ENCODE measurements at regions of chr2 and their contacts with region 1.

Region 1: DNA sequence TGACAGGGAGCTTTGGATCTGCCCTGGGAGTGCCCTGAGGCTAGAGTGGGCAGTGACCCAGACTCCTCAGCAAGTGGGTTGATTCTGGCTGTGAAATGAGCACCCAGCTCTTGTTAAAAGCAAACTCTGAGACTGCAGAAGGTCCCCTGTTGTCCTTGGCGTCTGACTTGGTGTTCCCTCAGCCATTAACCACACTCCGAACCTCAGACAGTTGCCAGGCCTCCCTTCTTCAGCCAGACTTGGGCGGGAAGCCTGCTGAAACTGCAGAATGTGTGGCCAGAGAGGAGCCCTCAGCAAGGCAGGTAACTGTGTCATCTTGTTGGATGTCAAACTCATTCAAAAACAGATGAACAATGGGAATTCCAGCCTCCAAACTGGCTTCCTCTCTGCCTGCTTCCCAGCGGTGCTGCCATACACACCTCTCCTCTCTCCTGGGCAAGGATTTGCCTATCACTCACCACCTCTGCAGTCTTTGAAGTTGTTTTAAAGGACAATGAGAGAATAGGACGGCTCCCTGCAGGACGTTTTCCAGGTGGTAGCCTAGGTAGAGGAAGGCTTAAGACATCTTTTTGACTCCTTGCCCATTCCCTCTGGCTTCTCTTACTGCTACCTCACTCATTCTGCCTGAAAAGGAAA is 38.9 kb upstream of the B3GNT2 start:
- DNase-seq: no peak
- ATAC-seq: no peak
- H3K4me3 ChIP-seq: no peak overlapping the region
- H3K4me3 Mint-ChIP-seq: no peak overlapping the region
- H3K27ac ChIP-seq: no peak overlapping the region
- H3K27ac Mint-ChIP-seq: no peak overlapping the region
- H3K4me1 ChIP-seq: no peaks in the 10 kb centered on the region
- H3K4me1 Mint-ChIP-seq: no peaks in the 10 kb centered on the region
- H3K27me3 ChIP-seq: no peaks in the 10 kb centered on the region
- H3K27me3 Mint-ChIP-seq: no peaks in the 10 kb centered on the region

Region 2: GRCh38 chr2:62099523-62100175 is 57.3 kb before region 1 on chr2:
- CTCF ChIA-PET with region 1: interaction called in 1 of 2 experiments, 11 read pairs
- POLR2A ChIA-PET with region 1: no interaction called
- DNase-seq: no peak
- ATAC-seq: no peak
- H3K4me3 ChIP-seq: no peak overlapping the region
- H3K4me3 Mint-ChIP-seq: no peak overlapping the region
- H3K27ac ChIP-seq: no peak overlapping the region
- H3K27ac Mint-ChIP-seq: no peak overlapping the region
- H3K4me1 ChIP-seq: no peaks in the 10 kb centered on the region
- H3K4me1 Mint-ChIP-seq: no peaks in the 10 kb centered on the region
- H3K27me3 ChIP-seq: no peaks in the 10 kb centered on the region
- H3K27me3 Mint-ChIP-seq: no peaks in the 10 kb centered on the region

Region 3: GRCh38 chr2:62304429-62305417 is 147.7 kb after region 1 on chr2:
- CTCF ChIA-PET with region 1: no interaction called
- POLR2A ChIA-PET with region 1: no interaction called
- DNase-seq: peak in 19 of 35 experiments; percentile 15 to 60 (median 22)
- ATAC-seq: peak; percentile 35 to 68 (median 50)
- H3K4me3 ChIP-seq: peak overlapping the region in 1 of 2 donors; percentile 5
- H3K4me3 Mint-ChIP-seq: peak overlapping the region in 2 of 3 donors; percentile 21 to 59
- H3K27ac ChIP-seq: peak overlapping the region; percentile 72
- H3K27ac Mint-ChIP-seq: peak overlapping the region; percentile 86 to 94
- H3K4me1 ChIP-seq: peaks cover 56 to 82% of the 10 kb centered on the region in 2 experiments
- H3K4me1 Mint-ChIP-seq: peaks cover 77 to 82% (median 79%) of the 10 kb centered on the region in 3 donors
- H3K27me3 ChIP-seq: no peaks in the 10 kb centered on the region
- H3K27me3 Mint-ChIP-seq: no peaks in the 10 kb centered on the region